ENCODE measurements at regions of chr18 and their contacts with region 1.

Region 1: GRCh38 chr18:32552421-32553030 is 81.8 kb upstream of the GAREM1 start:
- DNase-seq: peak; percentile 53
- H3K4me3 Mint-ChIP-seq: no peak overlapping the region
- H3K27ac Mint-ChIP-seq: no peak overlapping the region
- H3K4me1 Mint-ChIP-seq: no peaks in the 10 kb centered on the region
- H3K27me3 Mint-ChIP-seq: peaks cover 1% of the 10 kb centered on the region

Region 2: GRCh38 chr18:32271672-32272208 is 280.8 kb before region 1 on chr18:
- CTCF ChIA-PET with region 1: interaction called, 48 read pairs
- POLR2A ChIA-PET with region 1: no interaction called
- intact Hi-C with region 1: loop called (anchors 1 kb)
- DNase-seq: peak; percentile 27
- H3K4me3 Mint-ChIP-seq: no peak overlapping the region
- H3K27ac Mint-ChIP-seq: no peak overlapping the region
- H3K4me1 Mint-ChIP-seq: no peaks in the 10 kb centered on the region
- H3K27me3 Mint-ChIP-seq: no peaks in the 10 kb centered on the region

Region 3: GRCh38 chr18:32289483-32290075 is 262.9 kb before region 1 on chr18:
- CTCF ChIA-PET with region 1: interaction called, 17 read pairs
- POLR2A ChIA-PET with region 1: no interaction called
- intact Hi-C with region 1: loop called (anchors 1 kb)
- DNase-seq: peak; percentile 38
- H3K4me3 Mint-ChIP-seq: no peak overlapping the region
- H3K27ac Mint-ChIP-seq: no peak overlapping the region
- H3K4me1 Mint-ChIP-seq: no peaks in the 10 kb centered on the region
- H3K27me3 Mint-ChIP-seq: peaks cover 9% of the 10 kb centered on the region

Region 4: DNA sequence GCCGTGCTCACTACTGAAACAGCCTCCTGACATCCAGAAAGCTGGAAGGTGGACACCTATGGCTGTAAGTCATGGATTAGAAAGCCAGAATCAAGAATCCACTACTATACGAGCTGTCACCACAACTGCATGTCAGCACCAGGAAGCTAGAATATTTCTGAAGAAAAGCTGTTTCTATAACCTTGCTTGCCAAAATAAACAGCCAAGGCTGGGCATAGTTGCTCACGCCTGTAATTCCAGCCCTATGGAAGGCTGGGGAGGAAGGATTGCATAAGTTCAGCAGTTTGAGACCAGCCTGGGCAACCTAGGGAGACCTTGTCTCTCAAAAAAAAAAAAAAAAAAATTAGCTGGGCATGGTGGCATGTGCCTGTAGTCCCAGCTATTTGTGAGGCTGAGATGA is 14.4 kb after region 1 on chr18:
- CTCF ChIA-PET with region 1: interaction called, 12 read pairs
- POLR2A ChIA-PET with region 1: no interaction called
- intact Hi-C with region 1: no loop called
- DNase-seq: no peak
- H3K4me3 Mint-ChIP-seq: no peak overlapping the region
- H3K27ac Mint-ChIP-seq: no peak overlapping the region
- H3K4me1 Mint-ChIP-seq: no peaks in the 10 kb centered on the region
- H3K27me3 Mint-ChIP-seq: no peaks in the 10 kb centered on the region